ENCODE measurements at regions of chr17 and their contacts with region 1.

Region 1: GRCh38 chr17:32870027-32870670 is 6.8 kb downstream of the MYO1D start:
- DNase-seq: peak; percentile 75
- H3K4me3 ChIP-seq: peak overlapping the region in 1 of 3 experiments; percentile 57
- H3K27ac ChIP-seq: peak overlapping the region; percentile 96
- H3K4me1 ChIP-seq: peaks cover 38% of the 10 kb centered on the region
- H3K27me3 ChIP-seq: no peaks in the 10 kb centered on the region
- CTCF ChIP-seq: no peak
- POLR2A ChIP-seq: no peak

Region 2: GRCh38 chr17:32794533-32795246 is 75.5 kb before region 1 on chr17:
- CTCF ChIA-PET with region 1: interaction called, 3 read pairs
- POLR2A ChIA-PET with region 1: no interaction called
- dilution Hi-C with region 1: no loop called
- intact Hi-C with region 1: loop called (anchors 1 kb)
- DNase-seq: peak; percentile 39
- H3K4me3 ChIP-seq: no peak overlapping the region
- H3K27ac ChIP-seq: peak overlapping the region; percentile 92
- H3K4me1 ChIP-seq: peaks cover 57% of the 10 kb centered on the region
- H3K27me3 ChIP-seq: no peaks in the 10 kb centered on the region
- CTCF ChIP-seq: no peak
- POLR2A ChIP-seq: no peak

Region 3: DNA sequence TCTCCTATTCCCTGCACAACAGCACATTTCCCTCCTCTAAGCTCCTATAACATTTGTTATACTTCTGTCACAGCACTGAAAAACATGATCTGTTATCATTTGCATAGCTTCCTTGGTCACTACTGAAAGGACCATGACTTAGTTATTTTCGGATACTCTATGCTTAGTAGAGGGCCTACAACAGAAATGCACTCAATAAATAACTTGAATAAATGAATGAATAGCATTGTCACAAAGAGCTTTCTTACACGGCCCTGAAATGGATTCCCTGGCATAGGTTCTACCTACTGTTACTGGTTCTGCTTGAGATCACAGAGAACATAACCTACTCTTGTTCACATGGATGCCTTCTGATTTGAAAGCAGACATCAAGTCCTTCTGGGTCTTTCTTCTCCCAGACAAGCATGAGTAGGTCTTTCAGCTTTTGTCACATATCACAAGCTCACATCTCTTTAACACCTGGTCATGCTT is 34.8 kb before region 1 on chr17:
- CTCF ChIA-PET with region 1: interaction called, 3 read pairs
- POLR2A ChIA-PET with region 1: no interaction called
- dilution Hi-C with region 1: no loop called
- intact Hi-C with region 1: loop called (anchors 5 kb)
- DNase-seq: no peak
- H3K4me3 ChIP-seq: no peak overlapping the region
- H3K27ac ChIP-seq: no peak overlapping the region
- H3K4me1 ChIP-seq: no peaks in the 10 kb centered on the region
- H3K27me3 ChIP-seq: no peaks in the 10 kb centered on the region
- CTCF ChIP-seq: no peak
- POLR2A ChIP-seq: no peak

Region 4: DNA sequence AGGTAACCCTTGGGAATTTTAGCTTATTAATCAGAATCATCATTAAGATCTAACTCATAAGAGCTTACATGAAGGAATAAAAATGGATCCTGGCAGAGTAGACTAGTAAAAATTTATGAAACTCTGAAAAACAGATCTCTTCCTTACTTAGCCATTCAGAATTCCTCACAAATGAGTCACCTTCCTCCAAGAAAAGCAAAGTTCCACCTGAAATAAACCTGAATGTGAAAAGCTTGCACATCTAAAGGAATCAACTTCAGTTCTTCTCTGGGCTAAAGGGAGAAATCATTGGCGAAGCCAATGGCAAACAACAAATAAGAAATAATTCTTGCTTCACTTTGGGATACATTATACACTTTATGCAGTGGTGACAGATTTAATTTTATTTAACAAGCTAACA is 15.9 kb before region 1 on chr17:
- CTCF ChIA-PET with region 1: interaction called, 28 read pairs
- POLR2A ChIA-PET with region 1: no interaction called
- dilution Hi-C with region 1: no loop called
- intact Hi-C with region 1: loop called (anchors 1 kb)
- DNase-seq: peak; percentile 74
- H3K4me3 ChIP-seq: peak overlapping the region in 1 of 3 experiments; percentile 30
- H3K27ac ChIP-seq: peak overlapping the region; percentile 38
- H3K4me1 ChIP-seq: peaks cover 26% of the 10 kb centered on the region
- H3K27me3 ChIP-seq: no peaks in the 10 kb centered on the region
- CTCF ChIP-seq: no peak
- POLR2A ChIP-seq: no peak

Region 5: GRCh38 chr17:32894245-32894644 is 24.1 kb after region 1 on chr17:
- CTCF ChIA-PET with region 1: no interaction called
- POLR2A ChIA-PET with region 1: no interaction called
- dilution Hi-C with region 1: no loop called
- intact Hi-C with region 1: no loop called
- DNase-seq: no peak
- H3K4me3 ChIP-seq: no peak overlapping the region
- H3K27ac ChIP-seq: no peak overlapping the region
- H3K4me1 ChIP-seq: no peaks in the 10 kb centered on the region
- H3K27me3 ChIP-seq: peaks cover 0 to 3% of the 10 kb centered on the region in 2 experiments
- CTCF ChIP-seq: no peak
- POLR2A ChIP-seq: no peak

Region 6: GRCh38 chr17:33401249-33401648 is 531.1 kb after region 1 on chr17:
- CTCF ChIA-PET with region 1: no interaction called
- POLR2A ChIA-PET with region 1: no interaction called
- dilution Hi-C with region 1: no loop called
- intact Hi-C with region 1: no loop called
- DNase-seq: no peak
- H3K4me3 ChIP-seq: no peak overlapping the region
- H3K27ac ChIP-seq: no peak overlapping the region
- H3K4me1 ChIP-seq: no peaks in the 10 kb centered on the region
- H3K27me3 ChIP-seq: no peaks in the 10 kb centered on the region
- CTCF ChIP-seq: no peak
- POLR2A ChIP-seq: no peak

Measured in endothelial cell of umbilical vein (primary cell).